ENCODE measurements at regions of chr3 and their contacts with region 1.

Region 1: DNA sequence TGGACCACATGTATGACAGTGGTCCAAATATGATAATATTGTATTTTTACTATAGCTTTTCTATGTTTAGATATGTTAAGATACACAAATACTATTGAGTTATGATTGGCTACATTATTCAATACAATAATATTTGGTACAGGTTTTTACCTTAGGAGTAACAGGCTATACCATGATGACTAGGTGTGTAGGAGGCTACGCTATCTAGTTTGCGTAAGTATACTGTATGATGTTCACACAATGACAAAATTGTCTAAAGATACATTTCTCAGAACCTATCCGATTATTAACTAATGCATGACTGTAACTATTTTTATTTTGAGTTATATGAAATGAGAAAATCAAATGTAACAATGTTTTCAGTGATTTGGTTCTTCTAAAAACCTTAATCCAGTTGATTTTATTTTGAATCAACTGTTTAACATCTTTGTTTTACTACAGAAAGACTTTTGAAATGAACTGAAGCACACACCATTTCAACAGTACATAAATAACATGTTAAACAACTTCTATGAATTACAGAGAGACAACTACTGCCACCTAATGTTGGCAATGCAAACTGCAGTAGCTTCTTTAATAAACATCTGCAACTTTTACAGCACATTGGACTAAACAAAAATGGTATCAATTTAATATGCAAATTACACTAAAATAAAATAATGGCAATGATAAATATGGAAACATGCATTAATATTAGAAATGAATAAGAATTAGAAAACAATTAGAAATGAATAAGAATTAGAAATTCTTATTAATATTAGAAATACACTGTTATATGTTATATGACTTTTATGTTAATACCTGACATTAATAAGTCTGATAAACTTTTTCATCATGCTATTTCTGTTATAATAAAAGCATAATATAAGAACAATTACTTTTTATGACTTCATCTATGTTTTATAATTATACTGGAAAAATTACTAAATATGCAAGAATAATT is 255.7 kb downstream of the MBNL1 start:
- DNase-seq: peak in 1 of 2 experiments; percentile 18
- H3K4me3 ChIP-seq: no peak overlapping the region
- H3K27ac ChIP-seq: no peak overlapping the region
- H3K4me1 ChIP-seq: no peaks in the 10 kb centered on the region
- H3K27me3 ChIP-seq: no peaks in the 10 kb centered on the region
- CTCF ChIP-seq: peak; percentile 95

Region 2: DNA sequence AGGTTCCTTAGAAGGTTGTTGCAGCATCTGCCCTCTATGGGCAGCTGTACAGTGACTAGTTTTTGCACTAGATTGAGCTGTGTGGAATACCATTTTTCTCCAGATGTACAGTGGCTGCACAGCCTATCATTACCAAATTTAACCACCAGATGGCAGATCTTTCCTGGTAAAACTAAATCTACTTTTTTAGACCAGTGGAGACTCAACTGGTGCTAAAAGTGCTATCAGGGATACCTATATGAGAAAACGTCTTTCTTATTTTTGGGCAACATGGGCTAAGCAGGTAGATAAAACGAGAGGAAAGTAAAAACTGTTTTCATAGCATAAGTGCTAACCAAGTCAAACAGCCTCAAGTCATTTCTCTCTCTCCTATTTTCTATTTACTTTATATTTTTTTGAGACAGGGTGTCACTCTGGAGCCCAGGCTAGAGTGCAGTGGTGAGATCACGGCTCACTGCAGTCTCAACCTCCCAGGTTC is 1084.8 kb before region 1 on chr3:
- CTCF ChIA-PET with region 1: no interaction called
- POLR2A ChIA-PET with region 1: no interaction called
- intact Hi-C with region 1: loop called (anchors 5 kb)
- DNase-seq: peak; percentile 40 to 55
- H3K4me3 ChIP-seq: no peak overlapping the region
- H3K27ac ChIP-seq: no peak overlapping the region
- H3K4me1 ChIP-seq: peaks cover under 1% of the 10 kb centered on the region; the same call in 1 of the 2 replicates
- H3K27me3 ChIP-seq: no peaks in the 10 kb centered on the region
- CTCF ChIP-seq: peak; percentile 91

Region 3: DNA sequence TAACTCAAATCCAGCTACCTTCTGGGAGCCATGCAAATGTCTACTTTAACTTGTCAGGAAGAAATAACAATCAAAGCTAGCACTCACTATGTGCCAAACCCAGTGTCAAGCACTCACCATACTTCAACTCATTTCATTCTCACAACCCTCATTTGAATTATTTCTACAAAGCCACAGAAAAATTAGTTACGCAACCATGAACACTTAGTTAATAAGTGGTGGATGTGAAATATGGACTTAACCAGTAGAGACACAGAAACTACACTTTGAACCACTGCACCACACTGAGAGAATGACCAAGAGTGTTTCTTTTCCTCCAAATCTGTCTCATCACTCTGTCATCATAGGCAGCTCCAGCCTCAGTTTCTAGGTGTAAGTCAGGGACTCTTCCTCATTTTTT is 346.7 kb before region 1 on chr3:
- CTCF ChIA-PET with region 1: interaction called, 13 read pairs
- POLR2A ChIA-PET with region 1: no interaction called
- intact Hi-C with region 1: no loop called
- DNase-seq: no peak
- H3K4me3 ChIP-seq: no peak overlapping the region
- H3K27ac ChIP-seq: no peak overlapping the region
- H3K4me1 ChIP-seq: peaks cover 16% of the 10 kb centered on the region
- H3K27me3 ChIP-seq: no peaks in the 10 kb centered on the region
- CTCF ChIP-seq: no peak

Region 4: GRCh38 chr3:152508705-152509104 is 15.8 kb before region 1 on chr3:
- CTCF ChIA-PET with region 1: no interaction called
- POLR2A ChIA-PET with region 1: no interaction called
- intact Hi-C with region 1: no loop called
- DNase-seq: no peak
- H3K4me3 ChIP-seq: no peak overlapping the region
- H3K27ac ChIP-seq: no peak overlapping the region
- H3K4me1 ChIP-seq: no peaks in the 10 kb centered on the region
- H3K27me3 ChIP-seq: no peaks in the 10 kb centered on the region
- CTCF ChIP-seq: peak; percentile 56

Region 5: GRCh38 chr3:152671446-152672319 is 147.2 kb after region 1 on chr3:
- CTCF ChIA-PET with region 1: no interaction called
- POLR2A ChIA-PET with region 1: no interaction called
- intact Hi-C with region 1: no loop called
- DNase-seq: no peak
- H3K4me3 ChIP-seq: no peak overlapping the region
- H3K27ac ChIP-seq: no peak overlapping the region
- H3K4me1 ChIP-seq: no peaks in the 10 kb centered on the region
- H3K27me3 ChIP-seq: no peaks in the 10 kb centered on the region
- CTCF ChIP-seq: no peak

Region 6: GRCh38 chr3:152760024-152760563 is 235.6 kb after region 1 on chr3:
- CTCF ChIA-PET with region 1: no interaction called
- POLR2A ChIA-PET with region 1: no interaction called
- intact Hi-C with region 1: no loop called
- DNase-seq: no peak
- H3K4me3 ChIP-seq: no peak overlapping the region
- H3K27ac ChIP-seq: no peak overlapping the region
- H3K4me1 ChIP-seq: no peaks in the 10 kb centered on the region
- H3K27me3 ChIP-seq: no peaks in the 10 kb centered on the region
- CTCF ChIP-seq: no peak

Region 7: GRCh38 chr3:152909180-152909883 is 384.9 kb after region 1 on chr3:
- CTCF ChIA-PET with region 1: no interaction called
- POLR2A ChIA-PET with region 1: no interaction called
- intact Hi-C with region 1: no loop called
- DNase-seq: no peak
- H3K4me3 ChIP-seq: no peak overlapping the region
- H3K27ac ChIP-seq: 0 out of 2 replicates have a peak overlapping the region, but pooled peaks have one; percentile 5
- H3K4me1 ChIP-seq: peaks cover 12% of the 10 kb centered on the region; the same call in 1 of the 2 replicates
- H3K27me3 ChIP-seq: no peaks in the 10 kb centered on the region
- CTCF ChIP-seq: no peak